Body of pancreas (tissue), 4 donors: ENCODE measurements at regions of chr3 and their contacts with region 1.

Region 1: GRCh38 chr3:33883538-33883950 is 85.1 kb downstream of the PDCD6IP start:
- DNase-seq: peak in 1 of 4 donors; percentile 36
- ATAC-seq: no peak
- H3K4me3 ChIP-seq: no peak overlapping the region
- H3K27ac ChIP-seq: no peak overlapping the region
- H3K4me1 ChIP-seq: peaks cover 6% of the 10 kb centered on the region
- H3K27me3 ChIP-seq: no peaks in the 10 kb centered on the region
- CTCF ChIP-seq: peak; percentile 54 to 88 (median 74)
- POLR2A ChIP-seq: no peak

Region 2: GRCh38 chr3:34683851-34684250 is 800.3 kb after region 1 on chr3:
- intact Hi-C with region 1: loop called (anchors 10 kb)
- DNase-seq: peak; percentile 50 to 76 (median 57)
- ATAC-seq: peak; percentile 64
- H3K4me3 ChIP-seq: no peak overlapping the region
- H3K27ac ChIP-seq: no peak overlapping the region
- H3K4me1 ChIP-seq: no peaks in the 10 kb centered on the region
- H3K27me3 ChIP-seq: no peaks in the 10 kb centered on the region
- CTCF ChIP-seq: peak; percentile 22 to 65 (median 46)
- POLR2A ChIP-seq: no peak